ENCODE measurements at regions of chr17 and their contacts with region 1.

Region 1: DNA sequence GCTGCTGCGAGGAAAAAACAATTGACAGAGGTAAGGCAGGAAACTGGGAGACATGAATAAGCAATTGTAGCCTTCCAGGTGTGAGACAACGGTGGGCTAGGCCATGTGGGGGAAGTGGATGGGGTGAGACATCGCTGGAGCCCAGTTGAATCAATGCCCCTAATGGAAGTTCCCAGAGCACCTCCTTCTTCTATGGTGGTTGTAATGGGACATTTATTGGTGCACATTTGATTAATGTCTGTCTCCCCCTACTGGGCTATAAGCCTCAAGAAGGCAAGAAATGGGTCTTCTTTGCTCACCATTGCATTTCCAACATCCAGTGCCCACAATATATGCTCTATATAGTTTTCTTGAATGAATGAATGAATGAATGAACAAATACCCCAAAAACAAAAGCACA is 22.7 kb upstream of the CD300E start:
- DNase-seq: no peak
- ATAC-seq: peak; percentile 36
- H3K4me3 Mint-ChIP-seq: no peak overlapping the region
- H3K27ac Mint-ChIP-seq: no peak overlapping the region
- H3K4me1 Mint-ChIP-seq: no peaks in the 10 kb centered on the region
- H3K27me3 Mint-ChIP-seq: peaks cover 20% of the 10 kb centered on the region

Region 2: GRCh38 chr17:74566132-74566753 is 80.0 kb before region 1 on chr17:
- CTCF ChIA-PET with region 1: no interaction called
- POLR2A ChIA-PET with region 1: no interaction called
- intact Hi-C with region 1: loop called in 1 of 2 experiments (anchors 1 kb)
- DNase-seq: peak; percentile 66
- ATAC-seq: peak; percentile 47
- H3K4me3 Mint-ChIP-seq: no peak overlapping the region
- H3K27ac Mint-ChIP-seq: no peak overlapping the region
- H3K4me1 Mint-ChIP-seq: peaks cover 23% of the 10 kb centered on the region
- H3K27me3 Mint-ChIP-seq: peaks cover 8% of the 10 kb centered on the region